H1 (cell line): ENCODE measurements at regions of chr1 and their contacts with region 1.

Region 1: DNA sequence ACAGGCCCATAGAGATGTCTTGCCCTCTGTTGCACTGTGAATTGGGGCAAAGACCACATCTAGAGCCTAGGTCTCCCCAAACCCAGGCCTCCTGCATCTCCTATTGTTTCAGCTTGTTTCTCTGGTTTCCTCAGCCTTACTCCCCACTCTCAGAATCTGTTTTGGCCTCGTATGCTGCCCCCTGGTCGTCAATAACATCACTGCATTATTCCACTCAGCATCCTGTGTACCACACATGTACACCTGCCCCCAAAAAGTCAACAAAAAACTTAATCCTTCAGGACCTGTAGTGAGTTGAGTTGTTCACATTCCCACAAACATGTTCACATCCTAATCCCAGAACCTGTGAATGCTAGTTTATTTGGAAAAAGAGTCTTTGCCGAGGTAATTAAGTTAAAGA is 184.8 kb downstream of the BRINP2 start:
- DNase-seq: peak in 1 of 2 experiments; percentile 62
- H3K4me3 ChIP-seq: no peak overlapping the region
- H3K27ac ChIP-seq: no peak overlapping the region
- H3K4me1 ChIP-seq: peaks cover 4 to 11% (median 10%) of the 10 kb centered on the region in 4 experiments; a peak in 6 of 7 replicates
- H3K27me3 ChIP-seq: no peaks in the 10 kb centered on the region
- CTCF ChIP-seq: peak; percentile 24 to 64 (median 60)
- EP300 ChIP-seq: no peak
- POLR2A ChIP-seq: no peak
- RAD21 ChIP-seq: peak; percentile 62 to 71

Region 2: GRCh38 chr1:176897350-176898236 is 458.0 kb before region 1 on chr1:
- CTCF ChIA-PET with region 1: interaction called, 18 read pairs
- POLR2A ChIA-PET with region 1: no interaction called
- DNase-seq: peak; percentile 70 to 94
- H3K4me3 ChIP-seq: peak overlapping the region in 3 of 4 experiments; percentile 10 to 59 (median 22); a peak in 5 of 8 replicates
- H3K27ac ChIP-seq: no peak overlapping the region
- H3K4me1 ChIP-seq: no peaks in the 10 kb centered on the region
- H3K27me3 ChIP-seq: no peaks in the 10 kb centered on the region; a peak in 1 of 7 replicates
- CTCF ChIP-seq: peak; percentile 84 to 89 (median 87)
- EP300 ChIP-seq: no peak
- POLR2A ChIP-seq: no peak
- RAD21 ChIP-seq: peak; percentile 89 to 92

Region 3: DNA sequence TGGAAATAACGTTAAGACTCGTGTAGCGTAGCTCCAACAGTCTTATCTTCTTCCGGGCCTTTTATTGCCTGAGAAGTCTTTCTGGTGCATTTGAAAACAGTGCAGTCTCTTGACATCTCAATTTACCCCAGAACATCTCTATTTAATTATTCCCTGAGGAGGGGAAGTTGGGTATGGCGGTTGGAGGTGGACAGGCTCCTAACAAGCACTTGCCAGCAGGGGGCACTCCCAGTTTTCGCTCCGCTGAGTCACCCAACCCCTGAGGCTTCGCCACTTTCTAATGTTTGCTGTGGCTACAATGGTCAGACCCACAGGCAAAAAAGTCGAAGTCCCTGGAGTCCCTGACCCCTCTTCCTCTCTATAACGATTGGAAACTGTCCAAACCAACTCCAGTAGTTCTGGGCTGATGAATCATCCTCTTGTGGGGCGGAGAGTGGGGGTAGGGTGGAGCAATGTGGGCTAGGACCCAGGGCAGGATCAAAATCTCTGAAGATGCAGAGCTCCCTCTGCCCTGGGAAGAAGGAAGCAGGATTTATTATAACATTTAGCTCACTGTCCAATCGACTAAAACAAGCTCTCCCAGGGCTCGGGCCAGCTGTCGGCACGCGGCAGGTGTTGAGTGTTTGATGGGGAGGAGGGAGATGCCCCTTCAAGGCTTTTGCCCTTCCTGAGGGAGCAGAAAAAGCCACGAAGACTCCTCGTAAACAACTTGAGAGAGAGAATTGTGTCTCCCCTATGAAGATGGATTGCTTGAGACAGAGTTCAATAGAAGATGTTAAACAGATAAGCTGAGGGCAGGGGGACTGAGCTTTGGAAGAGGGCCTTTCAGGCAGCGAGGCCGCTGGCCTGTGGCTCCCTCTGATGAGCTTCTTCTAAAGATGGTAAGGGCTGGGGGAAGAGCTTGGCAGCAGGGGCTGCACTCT is 99.2 kb before region 1 on chr1:
- CTCF ChIA-PET with region 1: interaction called, 43 read pairs
- POLR2A ChIA-PET with region 1: no interaction called
- DNase-seq: peak; percentile 49 to 88
- H3K4me3 ChIP-seq: no peak overlapping the region
- H3K27ac ChIP-seq: no peak overlapping the region
- H3K4me1 ChIP-seq: peaks cover 0 to 4% (median 0%) of the 10 kb centered on the region in 4 experiments; a peak in 2 of 7 replicates
- H3K27me3 ChIP-seq: no peaks in the 10 kb centered on the region
- CTCF ChIP-seq: peak; percentile 63 to 70 (median 69)
- EP300 ChIP-seq: no peak
- POLR2A ChIP-seq: no peak
- RAD21 ChIP-seq: peak; percentile 79

Region 4: GRCh38 chr1:177333936-177334595 is 21.5 kb before region 1 on chr1:
- CTCF ChIA-PET with region 1: interaction called, 11 read pairs
- POLR2A ChIA-PET with region 1: no interaction called
- DNase-seq: no peak
- H3K4me3 ChIP-seq: no peak overlapping the region
- H3K27ac ChIP-seq: no peak overlapping the region
- H3K4me1 ChIP-seq: no peaks in the 10 kb centered on the region
- H3K27me3 ChIP-seq: no peaks in the 10 kb centered on the region
- CTCF ChIP-seq: peak in 1 of 3 experiments; percentile 22; a peak in 1 of 4 replicates
- EP300 ChIP-seq: no peak
- POLR2A ChIP-seq: no peak
- RAD21 ChIP-seq: no peak

Region 5: DNA sequence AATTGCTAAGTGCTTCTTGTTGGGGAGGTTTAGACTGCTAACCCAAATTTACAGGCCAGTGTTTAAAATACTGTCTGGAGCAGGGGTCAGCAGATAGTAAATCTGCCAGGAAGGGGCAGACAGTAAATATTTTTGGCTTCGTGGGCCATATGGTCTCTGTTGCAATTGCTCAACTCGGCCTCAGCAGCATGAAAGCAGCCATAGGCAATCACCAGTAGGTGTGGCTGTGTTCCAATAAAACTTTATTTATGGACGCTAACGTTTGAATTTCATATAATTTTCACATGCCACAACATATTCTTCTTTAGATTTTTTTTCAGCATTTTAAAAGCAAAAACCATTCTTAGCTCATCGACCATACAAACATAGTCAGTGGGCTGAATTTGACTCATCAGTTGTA is 12.2 kb before region 1 on chr1:
- CTCF ChIA-PET with region 1: interaction called, 26 read pairs
- POLR2A ChIA-PET with region 1: no interaction called
- DNase-seq: no peak
- H3K4me3 ChIP-seq: no peak overlapping the region
- H3K27ac ChIP-seq: no peak overlapping the region
- H3K4me1 ChIP-seq: no peaks in the 10 kb centered on the region
- H3K27me3 ChIP-seq: no peaks in the 10 kb centered on the region
- CTCF ChIP-seq: no peak
- EP300 ChIP-seq: no peak
- POLR2A ChIP-seq: no peak
- RAD21 ChIP-seq: no peak

Region 6: GRCh38 chr1:177368255-177368654 is 12.7 kb after region 1 on chr1:
- CTCF ChIA-PET with region 1: interaction called, 48 read pairs
- POLR2A ChIA-PET with region 1: no interaction called
- DNase-seq: no peak
- H3K4me3 ChIP-seq: no peak overlapping the region
- H3K27ac ChIP-seq: no peak overlapping the region
- H3K4me1 ChIP-seq: no peaks in the 10 kb centered on the region
- H3K27me3 ChIP-seq: no peaks in the 10 kb centered on the region
- CTCF ChIP-seq: no peak
- EP300 ChIP-seq: no peak
- POLR2A ChIP-seq: no peak
- RAD21 ChIP-seq: no peak

Region 7: DNA sequence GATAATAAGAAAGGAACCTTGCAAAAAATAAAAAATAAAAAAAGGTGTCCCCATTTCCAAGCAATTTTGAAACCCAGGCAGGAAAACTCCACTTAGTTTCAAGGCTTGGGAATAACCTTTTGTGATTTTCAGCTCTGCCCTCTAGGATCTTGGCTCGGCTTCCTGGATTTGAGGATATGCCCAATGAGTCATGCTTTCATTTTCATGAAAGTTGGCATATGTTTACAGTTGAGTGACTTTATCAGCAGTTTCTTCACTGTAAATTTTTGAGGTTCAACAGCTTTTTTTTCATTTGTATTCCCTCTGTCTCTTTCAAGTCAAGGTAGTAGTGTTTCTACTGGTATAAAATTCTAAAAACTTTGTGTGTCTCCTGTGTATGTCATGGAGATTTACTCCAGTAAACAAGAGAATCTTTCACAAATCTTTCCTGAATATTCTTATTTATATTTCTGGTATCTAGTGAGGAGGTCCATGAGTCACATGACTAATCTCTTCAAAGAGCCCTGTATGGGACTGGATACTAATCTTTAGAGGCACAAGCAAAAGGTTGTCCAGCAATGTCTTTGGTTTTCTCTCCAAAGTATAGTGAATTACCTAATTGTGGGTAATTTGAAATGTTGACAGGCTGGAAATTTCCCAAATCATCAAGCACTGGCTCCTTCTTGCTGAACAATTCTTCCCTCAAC is 150.5 kb after region 1 on chr1:
- CTCF ChIA-PET with region 1: no interaction called
- POLR2A ChIA-PET with region 1: no interaction called
- DNase-seq: no peak
- H3K4me3 ChIP-seq: no peak overlapping the region
- H3K27ac ChIP-seq: no peak overlapping the region
- H3K4me1 ChIP-seq: no peaks in the 10 kb centered on the region
- H3K27me3 ChIP-seq: no peaks in the 10 kb centered on the region
- CTCF ChIP-seq: no peak
- EP300 ChIP-seq: no peak
- POLR2A ChIP-seq: no peak
- RAD21 ChIP-seq: no peak